AG04450 (cell line): ENCODE measurements at regions of chr17 and their contacts with region 1.

Region 1: DNA sequence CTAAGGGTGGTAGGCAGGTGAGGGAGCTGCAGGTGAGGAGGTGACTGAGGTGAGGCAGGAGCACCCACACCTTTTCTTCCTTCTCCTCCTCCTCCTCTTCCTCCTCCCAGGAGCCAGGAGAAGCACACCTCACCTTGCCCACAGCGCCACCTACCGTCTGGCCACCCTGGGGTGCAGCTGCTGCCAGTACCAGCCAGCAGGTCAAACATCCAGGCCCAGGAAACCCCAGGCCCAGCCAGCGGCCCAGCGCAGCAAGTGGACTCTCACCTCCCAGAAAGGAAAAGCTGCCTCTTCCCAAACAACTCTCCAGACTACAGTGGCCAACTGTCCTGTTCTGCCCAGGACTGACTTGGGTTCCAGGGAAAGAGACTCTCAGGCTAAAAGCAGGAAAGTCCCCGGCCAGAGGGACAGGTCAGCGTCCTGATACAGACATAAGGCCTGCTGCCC is 22.7 kb downstream of the PEMT start:
- DNase-seq: no peak
- H3K4me3 ChIP-seq: no peak overlapping the region
- H3K27ac ChIP-seq: no peak overlapping the region
- H3K27me3 ChIP-seq: no peaks in the 10 kb centered on the region
- CTCF ChIP-seq: peak; percentile 82

Region 2: DNA sequence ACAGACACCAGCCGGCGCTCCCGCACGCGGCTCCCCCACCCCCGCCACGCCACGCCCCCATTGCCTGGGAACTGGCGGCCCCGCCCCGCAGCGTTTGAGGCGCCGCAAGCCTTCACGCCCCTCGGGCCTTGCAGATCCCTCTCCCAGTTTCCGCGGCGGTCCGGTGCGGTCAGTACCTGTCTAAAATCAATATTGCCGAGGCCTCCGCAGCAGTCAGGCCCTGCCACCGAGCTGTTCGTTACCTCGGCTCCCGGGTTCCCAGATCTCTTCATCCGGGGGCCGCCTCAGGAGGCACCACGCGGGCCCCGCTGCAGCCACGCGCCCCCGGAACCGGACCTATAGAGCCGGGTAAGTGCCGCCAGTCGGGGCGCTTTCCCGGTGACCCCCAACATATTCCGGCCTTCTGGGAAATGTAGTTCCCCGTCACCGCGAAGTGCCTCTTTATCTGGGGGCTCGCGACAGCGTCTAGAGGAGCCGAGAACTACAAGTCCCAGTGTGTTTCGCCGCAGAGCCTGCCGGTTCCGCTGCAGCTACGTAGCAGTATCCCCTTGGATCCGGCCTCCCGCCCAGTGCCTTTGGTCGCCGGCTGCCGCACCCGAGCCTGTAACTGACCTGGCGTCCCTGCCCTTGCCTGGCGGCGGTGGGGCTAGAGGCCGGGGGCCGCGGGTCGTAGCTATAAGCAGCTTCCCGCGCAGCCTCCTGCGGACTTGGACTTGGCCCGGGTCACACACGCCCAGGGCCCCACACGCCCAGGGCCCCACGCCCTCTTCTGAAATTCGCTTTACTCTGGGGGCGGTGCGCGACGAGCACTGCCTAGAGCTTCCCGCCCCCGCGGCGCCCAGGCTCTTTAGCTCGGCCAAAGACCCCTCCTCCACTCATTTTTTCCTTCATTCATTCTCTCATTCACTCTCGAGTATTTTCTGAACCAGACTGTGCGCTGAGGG is 22.9 kb after region 1 on chr17 and contains the start of gene PEMT:
- CTCF ChIA-PET with region 1: interaction called, 5 read pairs
- POLR2A ChIA-PET with region 1: interaction called, 11 read pairs
- DNase-seq: peak; percentile 98
- H3K4me3 ChIP-seq: peak within 1 kb of the TSS; percentile 81
- H3K27ac ChIP-seq: peak within 1 kb of the TSS; percentile 75
- H3K27me3 ChIP-seq: no peaks in the 10 kb centered on the region
- CTCF ChIP-seq: peak; percentile 14; the same call in 1 of the 2 replicates
- polyA plus RNA-seq, gene PEMT: 14.9 and 23.2 TPM in 2 replicates

Region 3: DNA sequence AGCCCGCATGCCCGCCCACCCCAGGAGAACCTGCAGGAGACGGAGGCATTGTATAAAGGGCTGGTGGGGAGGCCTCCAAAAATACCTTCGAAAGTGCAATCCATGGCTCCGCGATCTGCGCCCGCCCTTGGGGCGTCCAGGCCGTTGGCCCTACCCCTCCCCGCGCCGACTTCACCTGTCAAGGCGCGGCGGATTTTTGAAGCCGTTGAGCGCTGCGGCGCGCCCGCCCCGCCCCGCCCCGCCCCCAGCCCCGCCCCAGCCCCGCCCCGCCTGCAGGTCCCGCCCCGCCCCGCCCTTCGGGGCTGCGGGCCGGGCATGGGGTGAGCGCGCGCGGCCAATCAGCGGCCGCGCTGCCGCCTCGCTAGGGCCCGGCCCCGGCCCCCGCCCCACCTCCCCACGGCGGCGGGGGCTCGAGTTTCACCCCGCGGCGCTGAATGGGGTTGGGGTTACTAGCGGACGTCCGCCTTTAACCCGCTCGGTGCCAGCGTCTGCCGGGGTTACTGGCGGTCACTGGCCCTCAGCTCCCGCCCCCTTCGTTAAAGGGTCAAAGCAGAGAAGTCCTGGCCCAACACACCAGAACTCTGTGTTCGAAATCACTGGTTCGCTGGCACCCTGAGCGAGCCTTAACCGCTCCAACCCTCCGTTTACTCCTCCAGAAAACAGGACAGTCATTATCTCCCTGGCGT is 254.8 kb after region 1 on chr17:
- CTCF ChIA-PET with region 1: no interaction called
- POLR2A ChIA-PET with region 1: no interaction called
- DNase-seq: no peak
- H3K4me3 ChIP-seq: peak overlapping the region; percentile 58
- H3K27ac ChIP-seq: peak overlapping the region; percentile 77
- H3K27me3 ChIP-seq: no peaks in the 10 kb centered on the region
- CTCF ChIP-seq: no peak